A673 (cell line): ENCODE measurements at regions of chr6 and their contacts with region 1.

Region 1: DNA sequence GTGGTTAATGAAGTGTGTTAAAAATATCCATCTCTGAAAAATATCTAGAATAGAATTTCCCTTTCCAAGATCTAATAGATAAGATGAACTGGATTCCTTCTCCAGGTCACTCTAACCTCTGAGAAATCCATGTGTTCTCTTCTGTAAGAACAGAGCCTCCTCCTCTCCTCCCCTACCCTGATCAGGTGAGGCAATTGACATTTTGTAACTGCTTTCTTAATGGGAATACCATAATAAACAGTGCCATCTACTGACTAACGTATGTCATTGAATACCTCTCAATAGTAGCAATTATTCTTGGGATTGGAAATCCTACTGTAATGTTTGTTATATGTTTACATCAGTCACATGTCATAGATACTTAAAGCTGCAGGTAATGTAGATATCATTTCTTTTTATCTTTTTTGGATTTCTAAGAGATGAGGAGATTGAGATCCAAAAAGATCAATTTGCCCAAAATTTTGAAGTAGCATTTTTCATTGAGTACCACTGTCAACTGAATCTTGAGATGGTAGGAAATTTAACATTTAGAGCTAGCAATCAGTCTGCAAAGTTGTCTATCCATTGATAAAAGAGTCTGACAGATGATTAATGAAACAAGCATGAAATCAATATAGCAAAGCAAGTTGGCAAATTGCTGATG is 365.8 kb upstream of the HSF2 start:
- DNase-seq: peak; percentile 80
- H3K4me3 ChIP-seq: no peak overlapping the region
- H3K27ac ChIP-seq: no peak overlapping the region
- H3K4me1 ChIP-seq: no peaks in the 10 kb centered on the region
- H3K27me3 ChIP-seq: no peaks in the 10 kb centered on the region
- CTCF ChIP-seq: peak; percentile 72

Region 2: DNA sequence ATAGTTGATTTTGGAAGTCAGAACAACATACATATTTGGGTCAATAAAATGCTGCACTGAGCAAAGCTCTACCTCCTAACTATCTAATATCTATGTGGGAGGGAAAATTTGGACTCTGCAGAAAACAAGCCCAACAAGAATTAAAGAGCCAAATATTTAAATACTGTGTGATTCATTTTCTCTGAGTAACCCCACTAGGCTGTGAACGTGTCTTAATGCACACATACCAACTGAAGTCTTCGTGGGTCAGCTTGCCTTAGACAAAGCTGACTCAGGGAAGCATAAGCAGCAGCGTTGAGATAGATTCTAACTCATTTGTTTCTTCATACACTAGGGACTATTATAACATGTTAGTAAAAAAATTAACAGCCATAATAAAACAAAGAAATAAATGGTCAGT is 483.9 kb before region 1 on chr6:
- CTCF ChIA-PET with region 1: no interaction called
- POLR2A ChIA-PET with region 1: no interaction called
- intact Hi-C with region 1: loop called (anchors 10 kb)
- DNase-seq: no peak
- H3K4me3 ChIP-seq: no peak overlapping the region
- H3K27ac ChIP-seq: no peak overlapping the region
- H3K4me1 ChIP-seq: peaks cover 6% of the 10 kb centered on the region
- H3K27me3 ChIP-seq: no peaks in the 10 kb centered on the region
- CTCF ChIP-seq: no peak

Region 3: DNA sequence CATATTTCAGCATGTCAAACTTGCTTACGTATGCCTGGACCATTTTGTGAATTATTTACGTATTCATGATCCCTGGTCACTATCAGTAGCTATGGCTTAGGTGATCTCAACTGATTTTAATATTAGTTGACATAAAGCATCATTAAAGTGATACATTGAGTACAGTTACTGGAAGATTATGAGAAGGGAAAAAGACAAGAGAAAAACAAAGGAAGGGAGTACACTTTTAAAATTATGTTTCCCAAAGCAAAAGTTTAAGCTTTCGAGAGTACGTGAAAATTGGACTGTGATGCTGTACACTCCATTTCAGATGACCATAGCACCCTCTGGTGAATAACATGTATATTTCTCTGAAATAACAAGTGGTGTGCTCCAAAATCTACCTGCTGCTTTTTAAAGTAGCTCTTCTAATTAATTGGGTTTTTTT is 150.8 kb after region 1 on chr6:
- CTCF ChIA-PET with region 1: no interaction called
- POLR2A ChIA-PET with region 1: no interaction called
- intact Hi-C with region 1: loop called (anchors 5 kb)
- DNase-seq: peak; percentile 27
- H3K4me3 ChIP-seq: peak overlapping the region; percentile 16
- H3K27ac ChIP-seq: no peak overlapping the region
- H3K4me1 ChIP-seq: no peaks in the 10 kb centered on the region
- H3K27me3 ChIP-seq: no peaks in the 10 kb centered on the region
- CTCF ChIP-seq: peak; percentile 66